ENCODE measurements at regions of chr20 and their contacts with region 1.

Region 1: DNA sequence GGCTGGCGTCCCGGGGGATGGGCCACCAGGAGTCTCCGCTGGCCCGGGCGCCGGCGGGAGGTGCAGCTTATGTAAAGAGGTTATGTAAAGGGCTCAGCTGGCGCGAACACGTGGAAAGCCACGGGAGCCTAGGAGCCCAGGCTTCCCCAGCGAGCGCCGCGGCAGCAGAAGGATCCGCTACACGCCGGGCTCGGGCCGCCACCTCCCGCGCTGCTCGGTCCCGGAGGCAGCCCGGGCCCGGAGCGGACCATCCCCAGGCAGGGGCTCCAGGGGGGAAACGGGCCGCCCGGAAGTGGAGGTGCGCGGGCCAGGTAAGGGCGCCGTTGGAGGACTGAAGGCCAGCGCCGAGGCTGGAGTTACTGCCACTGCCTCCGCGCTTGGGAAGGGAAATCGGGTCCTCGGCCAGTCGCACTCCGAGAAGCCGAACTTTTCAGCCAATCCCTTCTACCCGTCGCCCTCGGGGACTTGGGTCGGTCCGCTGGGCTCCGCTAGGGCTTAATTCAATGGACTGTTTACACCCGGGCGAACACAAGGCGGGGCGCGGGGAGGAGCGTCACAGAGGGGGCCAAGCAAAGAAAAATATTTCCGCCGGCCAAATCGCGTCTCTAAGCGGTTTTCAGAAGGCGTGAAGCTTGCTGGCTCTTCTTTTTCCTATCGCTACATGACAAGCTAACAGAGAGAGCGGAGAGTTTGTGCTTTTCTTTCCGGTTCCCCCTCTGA is 398 bp downstream of the STK35 start:
- DNase-seq: peak; percentile 95 to 96
- ATAC-seq: peak; percentile 91 to 93 (median 92)
- H3K4me3 ChIP-seq: peak overlapping the region; percentile 93
- H3K27ac ChIP-seq: peak overlapping the region; percentile 99
- H3K4me1 ChIP-seq: peaks cover 36% of the 10 kb centered on the region
- H3K27me3 ChIP-seq: no peaks in the 10 kb centered on the region
- CTCF ChIP-seq: no peak

Region 2: DNA sequence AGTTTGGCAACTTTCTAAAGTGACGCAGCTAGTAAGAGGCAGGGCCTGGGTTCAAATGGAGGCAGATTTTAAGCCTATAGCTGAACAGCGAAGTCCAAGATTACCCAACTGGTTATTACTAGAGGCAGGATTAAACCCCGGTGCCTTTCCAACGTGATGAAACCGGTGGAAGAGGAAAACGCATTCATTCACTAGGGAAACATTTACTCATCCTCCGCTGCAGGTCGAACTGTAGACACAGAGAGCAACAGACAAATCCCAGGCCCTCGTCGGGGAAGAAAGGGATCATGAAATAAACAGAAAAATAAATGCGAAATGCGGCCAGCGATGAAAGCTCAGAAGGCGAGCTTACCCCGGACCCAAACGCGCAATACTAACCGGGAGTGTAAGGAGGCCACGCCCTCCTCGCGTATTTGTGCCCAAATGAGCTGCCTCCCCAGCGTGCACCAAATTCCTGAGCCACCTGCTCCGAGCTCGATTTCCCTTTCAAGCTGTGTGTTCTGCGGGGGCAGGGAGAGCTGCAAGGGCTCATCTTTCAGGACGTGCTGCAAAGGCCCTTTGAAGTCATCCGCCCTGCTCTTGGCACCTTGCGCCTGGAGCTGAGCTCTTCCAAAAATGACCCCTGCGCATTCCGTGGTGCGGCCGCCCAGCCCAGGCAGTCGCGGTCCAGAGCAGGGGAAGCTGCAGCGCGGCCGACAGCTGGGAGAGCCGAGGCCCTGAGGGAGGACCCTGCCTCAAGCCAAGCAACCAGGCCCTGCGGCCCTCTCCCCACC is 155.1 kb before region 1 on chr20:
- intact Hi-C with region 1: loop called in 1 of 2 experiments (anchors 2 kb)
- DNase-seq: peak; percentile 80 to 84
- ATAC-seq: peak; percentile 85 to 95 (median 88)
- H3K4me3 ChIP-seq: peak overlapping the region; percentile 49
- H3K27ac ChIP-seq: peak overlapping the region; percentile 81
- H3K4me1 ChIP-seq: peaks cover 35% of the 10 kb centered on the region
- H3K27me3 ChIP-seq: peaks cover 0 to 3% (median 0%) of the 10 kb centered on the region in 3 donors
- CTCF ChIP-seq: no peak

Region 3: GRCh38 chr20:2140561-2140960 is 38.5 kb after region 1 on chr20:
- intact Hi-C with region 1: loop called (anchors 1 to 5 kb)
- DNase-seq: peak; percentile 71 to 82
- ATAC-seq: peak; percentile 81 to 95 (median 93)
- H3K4me3 ChIP-seq: no peak overlapping the region
- H3K27ac ChIP-seq: peak overlapping the region; percentile 68
- H3K4me1 ChIP-seq: peaks cover 59% of the 10 kb centered on the region
- H3K27me3 ChIP-seq: no peaks in the 10 kb centered on the region
- CTCF ChIP-seq: no peak